PC-3 (cell line): ENCODE measurements at regions of chr17 and their contacts with region 1.

Region 1: DNA sequence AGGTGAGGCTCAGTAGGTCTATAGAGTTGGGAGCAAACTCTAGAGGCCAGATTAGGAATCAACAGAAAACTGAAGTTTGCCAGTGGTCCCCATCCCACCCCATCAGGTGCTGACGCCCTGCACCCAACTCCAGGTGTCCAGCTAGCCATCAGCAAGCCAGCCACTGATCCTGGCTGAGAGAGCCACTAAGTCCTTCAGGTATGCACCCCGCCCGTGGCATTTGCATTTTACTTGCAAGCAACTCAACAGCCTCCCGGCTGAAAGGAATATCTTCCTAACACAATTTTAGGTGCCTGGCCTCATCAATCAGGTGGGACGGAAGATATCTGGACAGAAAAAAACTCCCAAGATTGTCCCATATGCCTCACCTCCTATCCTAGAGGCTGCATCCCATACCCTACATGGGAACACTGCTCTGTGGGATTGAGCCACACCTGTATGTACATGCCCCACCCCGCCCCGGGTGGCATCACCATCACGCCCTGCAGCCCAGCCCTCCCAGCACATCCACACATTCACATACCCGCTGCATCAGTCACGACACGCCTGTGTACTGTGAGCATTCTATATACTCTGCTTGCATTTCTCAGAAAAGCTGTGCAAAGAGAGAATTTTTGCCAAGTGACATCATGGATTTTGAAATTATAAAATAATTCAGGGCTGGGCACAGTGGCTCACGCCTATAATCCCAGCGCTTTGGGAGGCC is 8.3 kb downstream of the OTOP3 start:
- DNase-seq: peak; percentile 98
- ATAC-seq: peak; percentile 99
- H3K4me3 ChIP-seq: no peak overlapping the region
- H3K27ac ChIP-seq: peak overlapping the region; percentile 82
- H3K4me1 ChIP-seq: peaks cover 27% of the 10 kb centered on the region
- H3K27me3 ChIP-seq: no peaks in the 10 kb centered on the region
- CTCF ChIP-seq: no peak

Region 2: DNA sequence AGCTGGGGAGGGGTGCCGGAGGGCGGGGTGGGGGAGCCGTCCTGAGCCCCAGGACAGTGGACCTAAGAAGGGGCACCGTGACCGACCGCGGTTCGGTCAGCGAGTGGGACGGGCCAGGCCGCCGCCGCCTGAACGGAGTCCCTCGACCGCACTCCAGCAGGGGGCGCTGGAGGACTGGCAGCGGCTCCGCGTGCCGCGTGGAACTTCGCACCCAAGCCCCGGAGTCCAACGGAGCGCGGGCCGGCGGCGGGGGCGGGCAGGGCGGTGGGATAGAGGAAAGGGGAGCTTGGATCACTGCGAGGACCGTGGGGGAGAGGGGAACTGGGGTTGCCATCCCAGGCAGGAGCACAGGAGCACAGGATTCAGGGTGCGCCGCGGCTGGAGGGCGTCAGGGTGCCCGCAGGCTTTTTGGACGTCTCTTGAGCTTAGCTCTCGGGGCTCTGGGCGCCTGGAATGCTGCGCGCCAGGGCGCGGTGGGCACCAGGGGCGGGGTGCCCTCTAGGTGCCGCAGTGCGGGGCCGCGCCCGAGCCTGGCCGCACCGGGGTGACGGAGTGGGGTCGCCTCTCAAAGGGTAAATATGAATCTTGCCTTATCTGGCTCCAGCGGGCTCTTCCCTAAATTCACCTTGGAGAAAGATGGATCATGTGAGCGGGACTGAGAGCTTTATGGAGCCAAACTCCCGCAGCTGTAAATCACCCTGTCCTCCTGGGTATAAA is 20.3 kb before region 1 on chr17:
- CTCF ChIA-PET with region 1: no interaction called
- POLR2A ChIA-PET with region 1: no interaction called
- intact Hi-C with region 1: loop called (anchors 1 kb)
- DNase-seq: peak; percentile 80
- ATAC-seq: peak; percentile 88
- H3K4me3 ChIP-seq: peak overlapping the region; percentile 63
- H3K27ac ChIP-seq: no peak overlapping the region
- H3K4me1 ChIP-seq: no peaks in the 10 kb centered on the region; the same call in 1 of the 2 replicates
- H3K27me3 ChIP-seq: peaks cover 31% of the 10 kb centered on the region
- CTCF ChIP-seq: peak; percentile 88